Activated CD8-positive, alpha-beta T cell treated with anti-CD3 and anti-CD28 coated beads for 36 hours (primary cell): ENCODE measurements at regions of chr19 and their contacts with region 1.

Region 1: DNA sequence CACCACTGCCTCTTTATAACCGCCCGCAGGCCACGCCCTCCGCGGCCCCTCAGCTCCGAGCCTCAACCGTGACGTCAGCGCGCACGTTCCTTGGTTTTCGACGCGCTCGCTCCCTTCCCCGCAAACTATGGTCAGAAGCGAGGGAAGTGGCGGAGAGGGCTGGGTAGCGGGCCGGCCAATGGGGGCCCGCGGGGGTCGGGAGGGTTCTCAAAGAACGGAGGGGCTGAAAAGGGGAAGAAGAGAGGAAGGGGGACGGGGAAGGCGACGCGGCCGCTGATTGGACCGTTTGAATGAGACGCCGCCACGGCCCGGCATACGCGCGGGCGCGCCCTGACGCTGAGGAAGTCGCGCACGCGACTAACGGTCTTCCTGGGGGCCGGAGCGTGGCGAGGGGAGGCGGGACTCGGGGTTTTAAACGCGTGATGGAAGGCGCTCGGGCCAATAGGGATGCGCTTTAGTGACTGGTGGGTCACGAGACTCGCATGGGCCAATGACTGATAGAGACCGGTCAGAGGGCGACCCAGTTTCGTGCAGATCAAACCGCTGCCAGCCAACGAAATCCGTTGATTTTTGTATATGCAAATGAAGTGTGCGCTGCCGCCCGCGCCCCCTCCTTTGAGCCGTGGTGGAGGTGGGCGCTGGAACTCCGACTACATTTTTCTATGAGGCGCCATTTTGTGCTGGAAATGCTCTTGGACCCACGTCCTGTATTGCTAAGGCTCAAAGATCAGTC is 378 bp upstream of the UBE2S start:
- DNase-seq: peak; percentile 98
- ATAC-seq: peak; percentile 94
- H3K4me3 Mint-ChIP-seq: peak overlapping the region; percentile 92
- H3K27ac Mint-ChIP-seq: peak overlapping the region; percentile 97
- H3K4me1 Mint-ChIP-seq: peaks cover 26% of the 10 kb centered on the region
- H3K27me3 Mint-ChIP-seq: no peaks in the 10 kb centered on the region
- CTCF ChIP-seq: no peak

Region 2: GRCh38 chr19:55270172-55270942 is 137.6 kb before region 1 on chr19:
- CTCF ChIA-PET with region 1: no interaction called
- POLR2A ChIA-PET with region 1: no interaction called
- intact Hi-C with region 1: no loop called
- DNase-seq: no peak
- ATAC-seq: no peak
- H3K4me3 Mint-ChIP-seq: no peak overlapping the region
- H3K27ac Mint-ChIP-seq: no peak overlapping the region
- H3K4me1 Mint-ChIP-seq: peaks cover 4% of the 10 kb centered on the region
- H3K27me3 Mint-ChIP-seq: no peaks in the 10 kb centered on the region
- CTCF ChIP-seq: no peak

Region 3: GRCh38 chr19:55391702-55392615 is 16.0 kb before region 1 on chr19:
- CTCF ChIA-PET with region 1: interaction called, 3 read pairs
- POLR2A ChIA-PET with region 1: interaction called, 217 read pairs
- intact Hi-C with region 1: no loop called
- DNase-seq: no peak
- ATAC-seq: no peak
- H3K4me3 Mint-ChIP-seq: no peak overlapping the region
- H3K27ac Mint-ChIP-seq: no peak overlapping the region
- H3K4me1 Mint-ChIP-seq: peaks cover 32% of the 10 kb centered on the region
- H3K27me3 Mint-ChIP-seq: no peaks in the 10 kb centered on the region
- CTCF ChIP-seq: no peak

Region 4: DNA sequence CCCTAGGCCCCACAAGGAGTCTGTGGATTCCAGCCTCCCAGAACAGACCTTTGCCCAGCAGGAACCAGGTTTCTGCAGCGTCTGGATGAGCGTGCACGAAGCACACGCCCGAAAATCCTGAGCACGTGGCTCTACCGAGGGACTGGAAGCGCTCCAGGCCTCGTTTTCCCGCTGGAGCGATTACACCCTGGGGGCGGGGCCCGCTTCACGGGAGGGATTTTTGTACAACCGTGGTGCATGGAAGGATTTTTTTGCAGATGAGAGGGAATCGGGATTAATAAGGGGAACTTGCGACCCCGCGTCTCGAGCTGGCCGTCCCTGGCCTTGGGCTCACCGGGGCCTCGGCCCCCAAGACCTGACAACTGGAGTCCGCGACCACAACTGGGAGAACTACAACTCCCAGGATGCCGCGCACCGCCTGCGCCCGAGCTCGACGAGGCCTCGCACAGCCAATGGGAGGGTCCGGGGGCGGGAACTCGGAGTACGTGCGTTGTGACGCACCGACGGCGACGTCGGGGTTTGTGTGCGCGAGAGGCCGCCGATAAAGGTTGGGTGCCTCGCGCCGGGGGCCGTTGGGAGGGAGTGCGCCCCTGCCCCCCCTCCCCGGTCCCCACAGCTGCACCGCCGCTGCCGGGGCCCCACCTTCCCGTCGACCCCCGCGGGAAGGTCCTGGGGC is 68.3 kb after region 1 on chr19 and contains the start of gene ZNF628:
- CTCF ChIA-PET with region 1: no interaction called
- POLR2A ChIA-PET with region 1: no interaction called
- intact Hi-C with region 1: no loop called
- DNase-seq: peak; percentile 99
- ATAC-seq: peak; percentile 93
- H3K4me3 Mint-ChIP-seq: peak within 1 kb of the TSS; percentile 91
- H3K27ac Mint-ChIP-seq: peak within 1 kb of the TSS; percentile 92
- H3K4me1 Mint-ChIP-seq: peaks cover 28% of the 10 kb centered on the region
- H3K27me3 Mint-ChIP-seq: no peaks in the 10 kb centered on the region
- CTCF ChIP-seq: no peak
- total RNA-seq, gene ZNF628: 8.4 to 8.6 TPM